ENCODE measurements at regions of chr14 and their contacts with region 1.

Region 1: GRCh38 chr14:100383727-100384158 is 60.6 kb downstream of the SLC25A47 start:
- DNase-seq: peak; percentile 53 to 55
- ATAC-seq: peak; percentile 48 to 83 (median 70)
- H3K4me3 ChIP-seq: no peak overlapping the region
- H3K27ac ChIP-seq: no peak overlapping the region
- H3K4me1 ChIP-seq: peaks cover 0 to 10% (median 0%) of the 10 kb centered on the region in 9 donors
- H3K27me3 ChIP-seq: no peaks in the 10 kb centered on the region
- CTCF ChIP-seq: peak; percentile 66 to 88 (median 82)

Region 2: DNA sequence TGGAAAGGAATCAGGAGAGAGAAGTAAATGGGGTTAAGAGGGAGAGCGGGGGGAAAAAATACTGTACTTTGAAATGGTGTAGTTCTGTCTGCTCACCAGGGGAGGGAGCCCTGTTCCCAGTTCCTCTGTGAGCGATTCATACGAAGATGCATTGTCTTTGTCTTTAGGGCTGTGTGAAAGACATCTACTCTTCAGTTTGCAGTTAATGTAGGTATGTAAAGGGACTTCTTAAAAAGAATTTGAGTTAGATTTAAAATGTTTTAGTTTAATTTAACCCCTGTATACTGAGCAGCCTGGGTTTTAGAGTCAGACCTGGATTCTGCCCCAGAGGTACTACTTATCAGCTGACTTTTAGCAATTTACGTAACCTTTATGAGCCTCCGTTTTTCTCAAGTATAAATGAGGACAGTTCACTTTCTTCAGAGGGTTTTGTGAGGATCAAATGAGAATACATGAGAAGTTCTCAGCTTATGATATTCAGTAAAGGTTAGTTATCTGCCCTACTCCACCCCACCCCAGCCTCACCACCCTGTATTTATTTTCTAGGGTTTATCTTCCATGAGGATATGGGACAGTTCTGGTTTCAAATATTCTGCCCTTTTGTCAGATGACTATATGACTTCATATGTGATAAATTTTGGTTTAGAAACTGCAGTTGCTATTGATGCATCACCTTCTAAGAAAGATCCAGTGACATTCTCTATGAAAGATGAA is 401.0 kb before region 1 on chr14:
- intact Hi-C with region 1: loop called in 5 of 10 experiments (anchors 5 to 10 kb)
- DNase-seq: peak in 1 of 2 donors; percentile 50
- ATAC-seq: peak in 7 of 8 donors; percentile 76 to 92 (median 87)
- H3K4me3 ChIP-seq: no peak overlapping the region
- H3K27ac ChIP-seq: no peak overlapping the region
- H3K4me1 ChIP-seq: peaks cover 0 to 22% (median 10%) of the 10 kb centered on the region in 9 donors
- H3K27me3 ChIP-seq: no peaks in the 10 kb centered on the region
- CTCF ChIP-seq: peak; percentile 75 to 93 (median 89)

Region 3: DNA sequence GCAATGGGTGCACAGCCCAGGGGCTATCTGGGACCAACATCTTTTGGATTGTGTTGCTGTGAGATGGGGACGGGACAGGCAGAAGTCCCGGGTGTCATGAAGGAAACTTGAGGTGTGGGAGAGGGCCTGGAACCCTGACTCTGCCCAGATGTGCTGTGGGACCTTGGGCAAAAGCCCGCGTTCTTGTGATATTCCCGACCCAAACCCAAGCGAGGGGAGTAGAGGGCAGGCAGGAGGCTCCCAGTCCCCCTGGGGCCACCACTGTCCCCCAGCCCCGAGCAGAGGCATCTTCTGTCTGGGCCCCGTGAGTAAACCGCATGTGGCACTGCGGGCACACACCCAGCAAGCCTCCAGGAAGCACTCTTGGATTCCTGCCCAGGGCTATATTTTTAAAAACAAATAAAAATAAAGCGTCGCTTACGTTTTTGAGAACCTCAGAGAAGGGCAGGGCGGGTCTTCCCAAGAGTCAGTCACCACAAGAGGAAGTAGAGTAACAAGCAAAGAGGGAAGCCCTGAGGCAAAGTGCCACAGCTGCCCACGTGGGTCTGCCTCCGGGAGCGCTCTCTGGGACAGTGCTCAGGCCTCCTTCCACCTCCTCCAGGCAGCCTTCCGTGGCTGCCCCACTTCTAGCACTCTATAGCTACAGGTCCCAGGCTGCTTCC is 164.0 kb after region 1 on chr14:
- intact Hi-C with region 1: loop called in 1 of 10 experiments (anchors 10 kb)
- DNase-seq: peak; percentile 38 to 54
- ATAC-seq: peak in 7 of 8 donors; percentile 45 to 84 (median 63)
- H3K4me3 ChIP-seq: peak overlapping the region in 1 of 10 donors; percentile 18
- H3K27ac ChIP-seq: peak overlapping the region in 2 of 10 donors; percentile 21 to 60
- H3K4me1 ChIP-seq: peaks cover 0 to 24% (median 0%) of the 10 kb centered on the region in 9 donors
- H3K27me3 ChIP-seq: peaks cover 0 to 3% (median 0%) of the 10 kb centered on the region in 7 donors
- CTCF ChIP-seq: no peak